Thyroid gland (tissue), 4 donors: ENCODE measurements at regions of chr11 and their contacts with region 1.

Region 1: GRCh38 chr11:86041975-86042378 is 26.9 kb downstream of the PICALM start:
- DNase-seq: peak; percentile 67
- H3K4me3 ChIP-seq: no peak overlapping the region
- H3K27ac ChIP-seq: peak overlapping the region in 2 of 3 donors; percentile 50 to 71
- H3K4me1 ChIP-seq: peaks cover 14 to 34% of the 10 kb centered on the region in 2 donors
- H3K27me3 ChIP-seq: no peaks in the 10 kb centered on the region
- CTCF ChIP-seq: peak; percentile 64 to 99 (median 91)
- POLR2A ChIP-seq: no peak

Region 2: DNA sequence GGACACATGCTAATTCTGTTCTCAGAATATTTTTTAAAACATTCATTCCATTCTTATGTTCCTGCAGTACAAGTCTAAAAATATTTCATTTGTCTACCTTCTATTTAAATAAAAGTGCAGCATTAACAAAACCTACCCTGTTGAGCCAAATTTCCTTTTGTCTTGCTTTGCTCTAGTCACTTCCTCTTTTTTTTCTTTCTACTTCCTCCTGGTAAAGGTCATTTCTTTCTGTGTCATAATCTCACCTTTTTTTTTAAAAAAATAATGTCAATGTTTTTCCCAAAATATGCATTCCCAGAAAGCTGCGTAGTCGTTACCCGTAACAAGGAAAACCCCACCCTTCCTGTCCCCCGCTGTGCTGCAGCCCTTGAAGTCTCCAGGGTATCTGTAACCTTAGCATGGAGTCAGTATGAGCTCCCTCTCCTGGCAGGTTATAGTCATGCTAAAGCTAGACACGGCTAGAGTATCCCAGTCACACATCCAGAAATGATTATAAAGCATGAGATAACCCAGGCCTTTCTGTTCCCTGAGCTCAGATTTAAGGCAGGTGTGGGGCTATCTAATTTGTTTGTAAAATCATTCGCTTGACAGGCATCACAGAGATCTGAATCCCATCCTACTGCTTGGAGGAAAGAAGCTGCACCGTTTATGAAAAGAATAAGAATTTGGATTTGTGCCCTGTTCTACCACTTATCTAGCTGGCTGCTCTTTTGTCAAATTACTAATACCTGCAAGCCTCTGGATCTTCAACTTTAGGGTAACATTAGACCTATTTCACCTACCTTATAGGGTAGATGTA is 151.5 kb after region 1 on chr11:
- intact Hi-C with region 1: loop called (anchors 5 kb)
- DNase-seq: peak; percentile 60 to 62
- H3K4me3 ChIP-seq: no peak overlapping the region
- H3K27ac ChIP-seq: peak overlapping the region in 2 of 3 donors; percentile 11 to 38
- H3K4me1 ChIP-seq: peaks cover 8 to 9% of the 10 kb centered on the region in 2 donors
- H3K27me3 ChIP-seq: no peaks in the 10 kb centered on the region
- CTCF ChIP-seq: peak; percentile 45 to 90 (median 69)
- POLR2A ChIP-seq: no peak